PC-9 (cell line): ENCODE measurements at regions of chr16 and their contacts with region 1.

Region 1: GRCh38 chr16:57422026-57422944 is 17.7 kb downstream of the CCL17 start:
- DNase-seq: peak; percentile 59 to 64
- H3K4me3 ChIP-seq: no peak overlapping the region
- H3K27ac ChIP-seq: no peak overlapping the region
- H3K4me1 ChIP-seq: peaks cover 23% of the 10 kb centered on the region
- H3K27me3 ChIP-seq: no peaks in the 10 kb centered on the region
- CTCF ChIP-seq: peak; percentile 85

Region 2: DNA sequence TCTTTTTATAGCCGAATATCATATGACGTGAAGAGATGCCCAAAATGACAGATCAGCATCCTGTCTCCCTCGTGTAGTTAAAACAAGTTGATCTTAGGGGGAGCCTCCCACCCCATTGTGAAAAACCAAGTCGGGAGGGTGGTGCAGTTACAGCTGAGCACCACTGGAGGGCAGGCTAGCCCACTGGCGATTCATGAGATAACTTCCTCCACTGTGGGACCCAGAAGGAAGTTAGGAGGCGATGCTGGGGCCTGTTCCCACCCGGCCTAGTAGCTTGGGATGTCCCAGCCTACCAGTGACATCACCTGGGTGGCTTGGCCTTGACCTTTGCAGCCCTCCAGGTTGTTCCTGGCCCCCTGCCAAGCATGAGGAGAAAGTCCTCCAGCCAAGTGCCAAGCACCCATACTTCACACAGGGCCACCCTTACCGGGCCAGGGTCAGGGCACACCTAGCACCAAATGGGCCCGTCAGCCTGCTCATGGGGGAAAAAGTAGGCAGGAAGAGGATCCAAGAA is 338.0 kb before region 1 on chr16:
- CTCF ChIA-PET with region 1: no interaction called
- POLR2A ChIA-PET with region 1: no interaction called
- intact Hi-C with region 1: loop called (anchors 1 kb)
- DNase-seq: peak; percentile 47 to 59
- H3K4me3 ChIP-seq: no peak overlapping the region
- H3K27ac ChIP-seq: no peak overlapping the region
- H3K4me1 ChIP-seq: no peaks in the 10 kb centered on the region
- H3K27me3 ChIP-seq: no peaks in the 10 kb centered on the region
- CTCF ChIP-seq: peak; percentile 98

Region 3: GRCh38 chr16:57244767-57245471 is 177.4 kb before region 1 on chr16 and contains the start of gene ARL2BP:
- CTCF ChIA-PET with region 1: no interaction called
- POLR2A ChIA-PET with region 1: no interaction called
- intact Hi-C with region 1: loop called (anchors 1 kb)
- DNase-seq: peak; percentile 89 to 98
- H3K4me3 ChIP-seq: peak within 1 kb of the TSS; percentile 78
- H3K27ac ChIP-seq: peak within 1 kb of the TSS; percentile 63
- H3K4me1 ChIP-seq: peaks cover 17% of the 10 kb centered on the region
- H3K27me3 ChIP-seq: no peaks in the 10 kb centered on the region
- CTCF ChIP-seq: no peak
- total RNA-seq, gene ARL2BP: 19.8 and 23.6 TPM in 2 replicates

Region 4: DNA sequence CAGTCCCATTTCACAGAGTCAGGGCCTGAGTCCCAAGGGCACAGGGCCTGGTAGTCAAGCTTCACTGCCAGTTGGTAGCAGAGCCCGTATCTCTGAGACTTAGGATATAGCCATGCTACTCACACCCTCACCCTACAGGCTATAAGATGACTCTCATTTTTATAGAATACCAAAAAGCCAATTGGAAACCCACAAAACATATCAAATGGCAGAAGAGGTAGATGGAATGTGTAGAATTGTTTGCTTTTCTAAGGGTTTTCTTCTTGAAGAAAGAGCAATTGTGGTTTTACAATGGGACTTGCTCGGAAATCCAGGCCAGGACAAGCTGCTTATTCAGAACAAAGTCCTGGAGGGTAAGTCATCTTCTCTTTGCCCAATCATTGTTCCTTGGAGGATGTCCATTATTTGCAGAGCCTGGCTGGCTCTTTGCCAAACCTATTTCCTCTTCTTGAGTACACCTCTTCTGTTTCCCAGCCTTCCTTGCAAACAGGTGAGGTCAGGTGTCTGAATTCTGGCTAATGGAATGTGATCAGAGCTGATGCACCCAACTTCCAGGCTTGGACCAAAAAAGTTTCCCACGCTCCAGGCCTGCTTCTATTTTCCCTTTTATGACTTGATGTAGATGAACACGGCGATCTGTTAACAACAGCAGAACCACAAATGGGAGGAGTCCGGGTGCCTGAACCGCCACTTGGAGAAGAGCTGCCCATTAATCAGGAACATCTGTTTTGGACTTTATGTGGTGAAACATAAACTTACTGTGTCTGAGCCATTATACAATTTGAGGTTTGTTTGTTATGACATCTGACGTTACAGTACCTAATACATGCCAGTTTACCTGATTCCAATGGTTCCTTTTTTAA is 80.6 kb before region 1 on chr16:
- CTCF ChIA-PET with region 1: interaction called, 5 read pairs
- POLR2A ChIA-PET with region 1: interaction called, 6 read pairs
- intact Hi-C with region 1: loop called (anchors 1 kb)
- DNase-seq: peak; percentile 89 to 100
- H3K4me3 ChIP-seq: peak overlapping the region; percentile 0; the same call in 1 of the 2 replicates
- H3K27ac ChIP-seq: peak overlapping the region; percentile 91
- H3K4me1 ChIP-seq: peaks cover 38% of the 10 kb centered on the region
- H3K27me3 ChIP-seq: no peaks in the 10 kb centered on the region
- CTCF ChIP-seq: no peak

Region 5: GRCh38 chr16:57470683-57471082 is 48.4 kb after region 1 on chr16:
- CTCF ChIA-PET with region 1: no interaction called
- POLR2A ChIA-PET with region 1: no interaction called
- intact Hi-C with region 1: no loop called
- DNase-seq: no peak
- H3K4me3 ChIP-seq: no peak overlapping the region
- H3K27ac ChIP-seq: no peak overlapping the region
- H3K4me1 ChIP-seq: no peaks in the 10 kb centered on the region
- H3K27me3 ChIP-seq: no peaks in the 10 kb centered on the region
- CTCF ChIP-seq: no peak

Region 6: DNA sequence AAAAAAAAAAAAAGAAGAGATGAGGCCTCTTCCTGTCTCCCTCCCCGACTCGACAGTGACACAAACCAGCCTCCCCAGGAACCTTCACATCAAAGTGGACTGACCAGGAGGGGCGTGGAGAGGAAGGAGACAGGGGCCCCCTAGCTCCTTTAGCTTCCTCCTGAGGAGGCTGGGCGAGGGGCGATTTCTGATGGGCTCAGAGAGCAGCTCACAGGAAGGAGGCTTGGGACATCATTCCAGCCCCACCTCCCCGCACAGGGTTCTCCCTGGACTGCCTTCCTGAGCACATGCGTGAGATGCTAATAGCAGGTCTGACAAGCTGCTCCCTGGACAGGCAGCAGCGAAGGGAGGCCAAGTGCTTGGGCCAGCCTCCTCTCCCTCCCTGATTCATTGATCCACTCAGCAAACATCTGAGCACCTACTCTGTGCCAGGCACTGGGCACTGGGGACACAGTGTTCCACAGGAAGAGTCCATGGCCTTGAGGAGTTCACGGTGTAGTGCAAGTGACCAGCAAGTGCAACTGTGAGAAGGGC is 78.4 kb after region 1 on chr16:
- CTCF ChIA-PET with region 1: no interaction called
- POLR2A ChIA-PET with region 1: no interaction called
- intact Hi-C with region 1: no loop called
- DNase-seq: no peak
- H3K4me3 ChIP-seq: no peak overlapping the region
- H3K27ac ChIP-seq: no peak overlapping the region
- H3K4me1 ChIP-seq: no peaks in the 10 kb centered on the region
- H3K27me3 ChIP-seq: peaks cover 8% of the 10 kb centered on the region; the same call in 1 of the 2 replicates
- CTCF ChIP-seq: no peak

Region 7: GRCh38 chr16:57519796-57520360 is 97.6 kb after region 1 on chr16:
- CTCF ChIA-PET with region 1: interaction called, 3 read pairs
- POLR2A ChIA-PET with region 1: no interaction called
- intact Hi-C with region 1: loop called (anchors 1 kb)
- DNase-seq: peak in 1 of 2 experiments; percentile 64
- H3K4me3 ChIP-seq: no peak overlapping the region
- H3K27ac ChIP-seq: no peak overlapping the region
- H3K4me1 ChIP-seq: no peaks in the 10 kb centered on the region
- H3K27me3 ChIP-seq: no peaks in the 10 kb centered on the region
- CTCF ChIP-seq: peak; percentile 96

Region 8: GRCh38 chr16:57548408-57548807 is 126.1 kb after region 1 on chr16:
- CTCF ChIA-PET with region 1: interaction called, 11 read pairs
- POLR2A ChIA-PET with region 1: no interaction called
- intact Hi-C with region 1: no loop called
- DNase-seq: no peak
- H3K4me3 ChIP-seq: no peak overlapping the region
- H3K27ac ChIP-seq: no peak overlapping the region
- H3K4me1 ChIP-seq: no peaks in the 10 kb centered on the region
- H3K27me3 ChIP-seq: peaks cover 4% of the 10 kb centered on the region; the same call in 1 of the 2 replicates
- CTCF ChIP-seq: no peak